Naive thymus-derived CD4-positive, alpha-beta T cell (primary cell): ENCODE measurements at regions of chr12 and their contacts with region 1.

Region 1: GRCh38 chr12:75511116-75512048 is at the start of gene KRR1:
- DNase-seq: peak; percentile 60 to 93 (median 90)
- ATAC-seq: peak; percentile 98
- H3K4me3 ChIP-seq: peak within 1 kb of the TSS; percentile 90
- H3K4me3 Mint-ChIP-seq: peak within 1 kb of the TSS; percentile 96 to 100 (median 99)
- H3K27ac ChIP-seq: peak within 1 kb of the TSS; percentile 89
- H3K27ac Mint-ChIP-seq: peak within 1 kb of the TSS; percentile 96 to 100 (median 99)
- H3K4me1 ChIP-seq: peaks cover 13% of the 10 kb centered on the region in 2 donors
- H3K4me1 Mint-ChIP-seq: peaks cover 15 to 47% (median 38%) of the 10 kb centered on the region in 7 donors
- H3K27me3 ChIP-seq: no peaks in the 10 kb centered on the region
- H3K27me3 Mint-ChIP-seq: no peaks in the 10 kb centered on the region
- total RNA-seq, gene KRR1: 69.3 to 120 (median 74.3) TPM

Region 2: GRCh38 chr12:74537707-74538385 is 973.5 kb before region 1 on chr12 and contains the start of gene ATXN7L3B:
- CTCF ChIA-PET with region 1: no interaction called
- POLR2A ChIA-PET with region 1: no interaction called
- intact Hi-C with region 1: loop called (anchors 1 kb)
- DNase-seq: peak; percentile 94 to 98 (median 97)
- ATAC-seq: peak; percentile 97
- H3K4me3 ChIP-seq: peak within 1 kb of the TSS; percentile 85
- H3K4me3 Mint-ChIP-seq: peak within 1 kb of the TSS; percentile 87 to 99 (median 97)
- H3K27ac ChIP-seq: peak within 1 kb of the TSS; percentile 94
- H3K27ac Mint-ChIP-seq: peak within 1 kb of the TSS; percentile 96 to 100 (median 99)
- H3K4me1 ChIP-seq: peaks cover 27 to 32% of the 10 kb centered on the region in 2 donors
- H3K4me1 Mint-ChIP-seq: peaks cover 39 to 60% (median 54%) of the 10 kb centered on the region in 7 donors
- H3K27me3 ChIP-seq: no peaks in the 10 kb centered on the region
- H3K27me3 Mint-ChIP-seq: no peaks in the 10 kb centered on the region
- total RNA-seq, gene ATXN7L3B: 25.6 to 51.6 (median 46.9) TPM

Region 3: DNA sequence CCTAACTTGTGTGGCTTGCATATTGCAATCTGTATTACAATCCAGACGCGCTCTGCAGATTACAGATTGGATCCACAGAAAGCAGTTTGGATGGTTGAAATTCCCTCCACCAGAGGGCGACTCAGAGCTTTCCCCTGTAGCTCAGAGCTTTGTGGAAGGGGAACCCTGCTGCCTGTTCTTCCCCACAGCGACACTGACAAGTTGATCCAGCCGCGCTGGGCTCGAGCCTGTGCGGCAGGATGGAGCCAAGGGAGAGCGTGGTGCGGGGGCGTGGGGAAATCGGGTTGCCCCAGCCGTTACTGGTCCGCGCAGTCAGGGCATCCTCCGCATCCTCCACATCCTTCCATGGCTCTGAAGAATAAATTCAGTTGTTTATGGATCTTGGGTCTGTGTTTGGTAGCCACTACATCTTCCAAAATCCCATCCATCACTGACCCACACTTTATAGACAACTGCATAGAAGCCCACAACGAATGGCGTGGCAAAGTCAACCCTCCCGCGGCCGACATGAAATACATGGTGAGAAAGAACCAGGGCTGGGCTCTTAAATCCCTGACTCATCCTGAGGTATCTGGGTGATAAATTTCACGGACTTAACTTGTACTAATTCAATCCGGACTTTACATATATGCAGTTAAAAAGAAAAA is 176.9 kb before region 1 on chr12 and contains the start of gene GLIPR1L1:
- CTCF ChIA-PET with region 1: interaction called, 7 read pairs
- POLR2A ChIA-PET with region 1: no interaction called
- intact Hi-C with region 1: loop called in 1 of 2 experiments (anchors 1 kb)
- DNase-seq: peak; percentile 58 to 79 (median 74)
- ATAC-seq: peak; percentile 91
- H3K4me3 ChIP-seq: no peak within 1 kb of the TSS
- H3K4me3 Mint-ChIP-seq: peak within 1 kb of the TSS; percentile 18 to 80 (median 74)
- H3K27ac ChIP-seq: no peak within 1 kb of the TSS
- H3K27ac Mint-ChIP-seq: peak within 1 kb of the TSS in 1 of 9 donors; percentile 3
- H3K4me1 ChIP-seq: peaks cover 0 to 5% of the 10 kb centered on the region in 2 donors
- H3K4me1 Mint-ChIP-seq: peaks cover 11 to 29% (median 18%) of the 10 kb centered on the region in 7 donors
- H3K27me3 ChIP-seq: peaks cover 0 to 6% of the 10 kb centered on the region in 2 donors
- H3K27me3 Mint-ChIP-seq: peaks cover 16 to 56% (median 31%) of the 10 kb centered on the region in 5 donors
- total RNA-seq, gene GLIPR1L1: not detected

Region 4: DNA sequence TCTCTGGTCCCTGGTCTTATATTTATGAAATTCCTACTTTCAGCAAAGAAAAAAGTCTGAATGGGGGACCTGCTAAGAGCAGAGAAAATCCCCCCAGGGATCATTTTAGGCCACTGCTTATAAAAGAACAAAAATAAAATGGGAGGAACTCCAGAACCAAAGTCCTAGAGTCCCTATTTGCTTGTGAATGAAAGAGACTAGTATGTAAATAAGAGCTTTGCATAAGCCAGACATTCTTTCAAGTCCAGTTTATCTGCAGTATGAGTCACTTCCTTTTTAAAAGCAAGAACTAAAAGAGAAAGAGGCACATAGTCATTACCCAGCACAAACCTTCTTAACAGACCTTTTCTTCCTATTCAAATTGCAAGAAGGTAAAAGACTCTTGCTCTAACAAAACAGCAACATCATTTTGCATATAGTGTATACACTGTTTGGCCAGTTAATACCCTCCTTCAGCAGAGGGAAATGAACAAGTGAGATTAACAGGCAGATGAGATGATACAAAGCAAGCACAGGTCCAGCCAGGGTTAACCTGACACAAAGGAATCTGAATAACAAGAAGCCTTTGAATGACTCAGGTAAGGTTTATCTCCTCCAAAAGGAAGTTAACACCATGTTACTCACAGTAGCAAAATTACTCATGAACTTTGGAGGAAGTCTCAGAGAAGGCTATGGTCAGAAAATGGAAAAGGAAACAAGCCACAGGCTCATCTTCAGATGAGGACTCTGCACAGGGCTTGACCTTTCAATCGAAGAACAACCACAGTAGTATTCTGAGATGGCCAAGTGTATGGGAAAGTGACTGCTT is 432.9 kb after region 1 on chr12:
- CTCF ChIA-PET with region 1: no interaction called
- POLR2A ChIA-PET with region 1: no interaction called
- intact Hi-C with region 1: loop called in 1 of 2 experiments (anchors 1 kb)
- DNase-seq: peak in 1 of 9 donors; percentile 35
- ATAC-seq: peak; percentile 87
- H3K4me3 ChIP-seq: no peak overlapping the region
- H3K4me3 Mint-ChIP-seq: peak overlapping the region in 2 of 10 donors; percentile 61 to 83
- H3K27ac ChIP-seq: no peak overlapping the region
- H3K27ac Mint-ChIP-seq: peak overlapping the region in 5 of 9 donors; percentile 40 to 97 (median 74)
- H3K4me1 ChIP-seq: peaks cover 0 to 16% of the 10 kb centered on the region in 2 donors
- H3K4me1 Mint-ChIP-seq: peaks cover 7 to 28% (median 11%) of the 10 kb centered on the region in 7 donors
- H3K27me3 ChIP-seq: no peaks in the 10 kb centered on the region
- H3K27me3 Mint-ChIP-seq: no peaks in the 10 kb centered on the region

Region 5: GRCh38 chr12:76348079-76348901 is 836.9 kb after region 1 on chr12 and contains the start of gene BBS10:
- CTCF ChIA-PET with region 1: no interaction called
- POLR2A ChIA-PET with region 1: interaction called, 5 read pairs
- intact Hi-C with region 1: loop called (anchors 1 kb)
- DNase-seq: peak; percentile 64 to 86 (median 84)
- ATAC-seq: peak; percentile 97
- H3K4me3 ChIP-seq: peak within 1 kb of the TSS; percentile 88
- H3K4me3 Mint-ChIP-seq: peak within 1 kb of the TSS; percentile 89 to 98 (median 96)
- H3K27ac ChIP-seq: peak within 1 kb of the TSS; percentile 79
- H3K27ac Mint-ChIP-seq: peak within 1 kb of the TSS; percentile 85 to 95 (median 93)
- H3K4me1 ChIP-seq: peaks cover 16 to 20% of the 10 kb centered on the region in 2 donors
- H3K4me1 Mint-ChIP-seq: peaks cover 15 to 48% (median 30%) of the 10 kb centered on the region in 7 donors
- H3K27me3 ChIP-seq: no peaks in the 10 kb centered on the region
- H3K27me3 Mint-ChIP-seq: no peaks in the 10 kb centered on the region
- total RNA-seq, gene BBS10: 2.5 to 11.5 (median 5.2) TPM

Region 6: GRCh38 chr12:76763743-76764675 is 1252.6 kb after region 1 on chr12 and contains the start of gene ZDHHC17:
- CTCF ChIA-PET with region 1: no interaction called
- POLR2A ChIA-PET with region 1: no interaction called
- intact Hi-C with region 1: loop called in 1 of 2 experiments (anchors 2 kb)
- DNase-seq: peak; percentile 90 to 95 (median 93)
- ATAC-seq: peak; percentile 90
- H3K4me3 ChIP-seq: peak within 1 kb of the TSS; percentile 84
- H3K4me3 Mint-ChIP-seq: peak within 1 kb of the TSS; percentile 92 to 98 (median 97)
- H3K27ac ChIP-seq: peak within 1 kb of the TSS; percentile 94
- H3K27ac Mint-ChIP-seq: peak within 1 kb of the TSS; percentile 95 to 99 (median 97)
- H3K4me1 ChIP-seq: peaks cover 8 to 13% of the 10 kb centered on the region in 2 donors
- H3K4me1 Mint-ChIP-seq: peaks cover 17 to 57% (median 46%) of the 10 kb centered on the region in 7 donors
- H3K27me3 ChIP-seq: no peaks in the 10 kb centered on the region
- H3K27me3 Mint-ChIP-seq: peaks cover 0 to 13% (median 0%) of the 10 kb centered on the region in 5 donors
- total RNA-seq, gene ZDHHC17: 27.3 to 60.9 (median 56.3) TPM

Region 7: DNA sequence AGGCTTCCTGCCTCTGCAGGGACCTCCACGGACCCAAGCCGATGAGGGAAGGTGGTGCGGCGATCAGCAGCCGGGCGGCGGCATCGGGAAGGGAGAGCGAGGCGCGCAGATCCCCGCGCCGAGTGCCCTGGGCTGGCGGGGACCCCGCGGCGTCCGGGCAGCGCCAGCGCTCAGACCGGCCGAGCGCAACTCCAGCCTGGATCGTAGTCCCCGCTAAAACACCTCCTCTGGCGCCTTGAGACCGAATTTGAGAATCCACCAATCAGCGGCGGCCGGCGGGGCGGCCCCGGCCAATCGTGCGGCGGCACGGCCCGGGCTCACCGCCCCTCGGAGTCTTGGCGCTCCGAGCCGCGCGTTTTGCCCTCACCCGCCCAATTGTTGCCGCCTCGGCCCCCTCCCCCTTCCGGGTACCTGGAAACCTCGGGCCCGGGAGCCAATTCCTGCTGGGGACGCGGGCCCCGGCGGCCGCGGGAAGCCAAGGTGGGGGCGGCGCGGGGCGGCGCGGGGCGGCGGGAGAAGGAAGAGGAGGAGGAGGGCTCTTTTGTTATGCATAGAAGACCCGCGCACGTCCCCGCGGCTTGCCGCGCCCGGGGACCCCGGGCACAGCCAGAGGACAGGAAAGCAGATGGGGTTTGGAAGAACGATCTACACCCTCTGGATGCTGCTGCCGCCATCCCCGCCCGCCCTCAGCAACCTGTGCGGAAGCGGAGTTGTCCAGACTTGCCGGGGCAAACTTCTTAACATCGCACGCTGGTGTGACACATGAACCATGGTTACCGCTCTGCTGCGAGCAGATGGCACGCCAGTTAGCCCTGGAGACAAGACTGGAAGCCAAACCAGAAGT is 1554.2 kb after region 1 on chr12 and contains the start of gene E2F7:
- CTCF ChIA-PET with region 1: no interaction called
- POLR2A ChIA-PET with region 1: no interaction called
- intact Hi-C with region 1: loop called in 1 of 2 experiments (anchors 10 kb)
- DNase-seq: peak; percentile 47 to 93 (median 69)
- ATAC-seq: peak; percentile 91
- H3K4me3 ChIP-seq: peak within 1 kb of the TSS; percentile 63
- H3K4me3 Mint-ChIP-seq: peak within 1 kb of the TSS; percentile 79 to 88 (median 85)
- H3K27ac ChIP-seq: no peak within 1 kb of the TSS
- H3K27ac Mint-ChIP-seq: peak within 1 kb of the TSS in 2 of 9 donors; percentile 69 to 80
- H3K4me1 ChIP-seq: peaks cover 0 to 7% of the 10 kb centered on the region in 2 donors
- H3K4me1 Mint-ChIP-seq: peaks cover 5 to 41% (median 8%) of the 10 kb centered on the region in 7 donors
- H3K27me3 ChIP-seq: no peaks in the 10 kb centered on the region
- H3K27me3 Mint-ChIP-seq: peaks cover 16 to 38% (median 30%) of the 10 kb centered on the region in 5 donors
- total RNA-seq, gene E2F7: 0.22 to 17.6 TPM in 2 of 5 experiments, not detected in the others